SK-N-SH (cell line): ENCODE measurements at regions of chr4 and their contacts with region 1.

Region 1: GRCh38 chr4:5998333-5998936 is 19.8 kb downstream of the C4orf50 start:
- DNase-seq: peak; percentile 88
- H3K4me3 ChIP-seq: peak overlapping the region in 1 of 2 experiments; percentile 57; a peak in 1 of 4 replicates
- H3K27ac ChIP-seq: no peak overlapping the region; a peak in 1 of 4 replicates
- H3K4me1 ChIP-seq: peaks cover 0 to 23% of the 10 kb centered on the region in 2 experiments; a peak in 1 of 4 replicates
- H3K27me3 ChIP-seq: no peaks in the 10 kb centered on the region
- CTCF ChIP-seq: peak; percentile 62
- EP300 ChIP-seq: no peak
- RAD21 ChIP-seq: peak; percentile 96

Region 2: DNA sequence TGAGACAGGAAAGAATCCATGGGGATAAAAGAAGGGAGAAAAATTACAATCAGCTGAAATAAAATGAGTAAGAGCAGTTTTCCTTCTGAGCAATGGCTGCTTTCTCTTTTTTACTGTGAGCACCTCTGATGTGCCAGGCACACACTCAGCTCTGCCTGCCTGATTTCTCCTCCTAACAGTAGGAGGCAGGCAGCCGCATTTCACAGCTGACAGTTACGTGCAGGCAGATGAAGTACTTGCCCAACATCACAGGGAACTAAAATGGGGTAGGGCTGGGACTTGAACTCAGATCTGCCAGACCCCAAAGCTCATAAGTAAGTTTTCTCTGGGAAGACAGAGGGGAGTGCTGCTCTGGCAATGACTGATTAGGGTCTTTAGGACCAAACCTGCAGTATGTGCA is 34.8 kb before region 1 on chr4:
- CTCF ChIA-PET with region 1: interaction called, 12 read pairs
- POLR2A ChIA-PET with region 1: no interaction called
- DNase-seq: no peak
- H3K4me3 ChIP-seq: no peak overlapping the region
- H3K27ac ChIP-seq: no peak overlapping the region
- H3K4me1 ChIP-seq: no peaks in the 10 kb centered on the region; a peak in 1 of 4 replicates
- H3K27me3 ChIP-seq: no peaks in the 10 kb centered on the region
- CTCF ChIP-seq: no peak
- EP300 ChIP-seq: no peak
- RAD21 ChIP-seq: no peak

Region 3: DNA sequence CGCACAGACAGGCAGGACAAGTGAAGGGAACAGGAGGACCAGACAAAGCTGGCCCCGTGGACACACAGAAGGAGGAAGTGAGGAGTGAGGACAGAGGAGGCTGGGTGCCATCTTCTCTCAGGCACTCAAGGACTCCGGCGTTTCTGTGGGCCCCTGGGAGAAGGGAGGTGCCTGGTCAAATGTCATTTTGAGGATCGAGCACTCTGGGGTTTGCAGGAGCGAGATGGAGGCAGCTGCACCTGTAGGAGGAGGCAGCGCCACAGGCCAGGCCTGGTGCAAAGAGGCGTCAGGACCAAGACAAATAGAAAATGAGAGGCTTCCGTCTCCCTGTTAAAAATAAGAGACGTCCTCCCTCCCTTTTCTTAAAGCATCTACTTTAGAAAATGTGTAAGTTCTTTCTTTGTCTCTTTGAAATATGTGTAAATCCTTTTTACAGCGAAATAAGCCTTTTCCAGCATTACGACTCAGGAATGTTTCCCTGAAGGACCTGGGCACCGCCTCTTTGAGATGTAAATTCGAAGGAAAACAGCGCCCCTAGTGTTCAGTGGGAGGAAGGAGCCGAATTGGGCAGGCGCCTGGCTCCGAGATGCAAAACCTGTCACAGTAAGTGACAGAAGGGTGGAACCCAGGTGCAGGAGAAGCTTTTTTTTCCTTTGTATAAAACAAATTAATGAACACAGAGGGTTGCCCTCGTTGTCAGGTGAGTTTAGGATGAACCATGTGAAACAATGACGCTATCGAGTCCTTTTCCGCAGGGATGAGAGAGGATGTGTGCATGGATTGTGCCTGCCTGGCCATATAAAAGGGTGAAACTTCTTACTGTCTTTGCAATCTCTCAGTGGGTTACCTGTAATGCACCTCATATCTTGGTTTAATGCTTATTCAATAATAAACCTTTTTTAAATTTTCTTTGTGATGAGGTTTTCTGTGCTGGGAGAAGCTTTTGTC is 21.2 kb after region 1 on chr4:
- CTCF ChIA-PET with region 1: interaction called, 107 read pairs
- POLR2A ChIA-PET with region 1: no interaction called
- DNase-seq: peak; percentile 72
- H3K4me3 ChIP-seq: no peak overlapping the region; a peak in 1 of 4 replicates
- H3K27ac ChIP-seq: no peak overlapping the region
- H3K4me1 ChIP-seq: no peaks in the 10 kb centered on the region; a peak in 1 of 4 replicates
- H3K27me3 ChIP-seq: no peaks in the 10 kb centered on the region
- CTCF ChIP-seq: peak; percentile 60
- EP300 ChIP-seq: no peak
- RAD21 ChIP-seq: peak; percentile 64

Region 4: GRCh38 chr4:6087673-6088341 is 89.4 kb after region 1 on chr4:
- CTCF ChIA-PET with region 1: interaction called, 92 read pairs
- POLR2A ChIA-PET with region 1: no interaction called
- DNase-seq: peak; percentile 73
- H3K4me3 ChIP-seq: peak overlapping the region in 1 of 2 experiments; percentile 30; a peak in 1 of 4 replicates
- H3K27ac ChIP-seq: no peak overlapping the region; a peak in 1 of 4 replicates
- H3K4me1 ChIP-seq: peaks cover 0 to 21% of the 10 kb centered on the region in 2 experiments; a peak in 1 of 4 replicates
- H3K27me3 ChIP-seq: no peaks in the 10 kb centered on the region
- CTCF ChIP-seq: no peak
- EP300 ChIP-seq: no peak
- RAD21 ChIP-seq: peak; percentile 71

Region 5: DNA sequence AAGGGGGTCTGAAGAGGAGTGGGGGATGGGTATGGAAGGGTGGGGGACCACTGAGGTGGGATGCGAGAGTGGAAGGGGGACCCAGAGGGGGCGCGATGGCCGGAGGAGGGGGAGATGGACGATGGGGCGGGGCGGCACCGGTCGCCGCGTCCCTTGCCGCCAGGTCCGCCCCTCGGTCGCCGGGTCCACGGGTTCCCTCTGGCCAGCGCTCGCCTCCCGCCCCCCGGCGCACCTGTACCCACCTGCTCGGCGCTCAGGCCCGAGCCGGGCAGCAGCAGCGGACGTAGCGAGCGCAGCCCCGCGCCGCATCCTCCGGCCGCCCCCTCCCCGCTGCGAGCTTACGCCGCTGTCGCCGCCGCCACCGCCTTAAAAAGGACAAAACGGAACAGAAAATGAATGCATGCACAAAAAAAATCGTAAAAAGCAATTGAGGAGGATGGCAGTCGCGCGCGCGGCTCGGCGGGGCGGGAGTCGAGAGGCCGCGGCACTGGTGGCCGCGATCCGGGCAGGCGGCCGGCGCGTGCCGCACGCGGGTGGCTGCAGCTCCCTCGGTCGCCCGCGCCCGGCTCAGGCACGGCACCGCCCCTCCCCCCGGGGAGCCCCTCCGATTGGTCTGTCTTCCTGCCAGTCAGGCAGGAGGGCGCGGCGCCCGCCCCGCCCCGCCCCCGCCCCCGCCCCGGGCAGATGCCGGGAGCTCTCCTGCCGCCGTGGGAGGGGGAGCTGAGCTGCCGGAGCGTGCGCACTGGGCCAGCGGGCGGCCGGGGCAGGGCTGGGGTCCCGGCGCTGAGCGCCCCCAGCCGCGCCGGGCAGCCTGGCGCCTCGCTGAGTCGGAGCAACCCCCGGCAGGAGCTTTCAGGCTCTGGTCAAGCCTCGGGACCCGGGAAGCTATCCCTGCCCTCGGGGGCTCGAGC is 201.8 kb after region 1 on chr4 and contains the start of gene JAKMIP1:
- CTCF ChIA-PET with region 1: interaction called, 12 read pairs
- POLR2A ChIA-PET with region 1: no interaction called
- DNase-seq: peak; percentile 99
- H3K4me3 ChIP-seq: peak within 1 kb of the TSS; percentile 37 to 54; a peak in 3 of 4 replicates
- H3K27ac ChIP-seq: peak within 1 kb of the TSS in 1 of 2 experiments; percentile 91; a peak in 2 of 4 replicates
- H3K4me1 ChIP-seq: peaks cover 0 to 39% of the 10 kb centered on the region in 2 experiments; a peak in 1 of 4 replicates
- H3K27me3 ChIP-seq: no peaks in the 10 kb centered on the region
- CTCF ChIP-seq: no peak
- EP300 ChIP-seq: no peak
- RAD21 ChIP-seq: no peak
- polyA plus RNA-seq, gene JAKMIP1: 0.54 and 1.0 TPM in 2 replicates

Region 6: DNA sequence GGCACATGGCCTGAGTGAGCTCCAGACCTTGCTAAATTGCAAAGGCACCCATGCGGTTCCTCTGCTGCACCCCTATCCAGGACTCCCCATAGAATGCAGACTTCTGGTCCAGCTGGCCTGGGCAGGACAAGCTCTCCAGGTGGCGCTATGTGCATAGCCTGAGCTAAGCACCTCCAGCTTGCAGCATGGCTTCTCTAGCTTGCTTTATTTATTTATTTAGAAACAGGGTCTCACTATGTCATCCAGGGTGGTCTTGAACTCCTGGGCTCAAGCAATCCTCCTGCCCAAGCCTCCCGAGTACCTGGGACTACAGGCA is 265.7 kb after region 1 on chr4:
- CTCF ChIA-PET with region 1: interaction called, 11 read pairs
- POLR2A ChIA-PET with region 1: no interaction called
- DNase-seq: peak; percentile 69
- H3K4me3 ChIP-seq: no peak overlapping the region
- H3K27ac ChIP-seq: no peak overlapping the region
- H3K4me1 ChIP-seq: peaks cover 0 to 5% of the 10 kb centered on the region in 2 experiments; a peak in 1 of 4 replicates
- H3K27me3 ChIP-seq: no peaks in the 10 kb centered on the region
- CTCF ChIP-seq: peak; percentile 58
- EP300 ChIP-seq: no peak
- RAD21 ChIP-seq: peak; percentile 89